ENCODE measurements at regions of chr1 and their contacts with region 1.

Region 1: DNA sequence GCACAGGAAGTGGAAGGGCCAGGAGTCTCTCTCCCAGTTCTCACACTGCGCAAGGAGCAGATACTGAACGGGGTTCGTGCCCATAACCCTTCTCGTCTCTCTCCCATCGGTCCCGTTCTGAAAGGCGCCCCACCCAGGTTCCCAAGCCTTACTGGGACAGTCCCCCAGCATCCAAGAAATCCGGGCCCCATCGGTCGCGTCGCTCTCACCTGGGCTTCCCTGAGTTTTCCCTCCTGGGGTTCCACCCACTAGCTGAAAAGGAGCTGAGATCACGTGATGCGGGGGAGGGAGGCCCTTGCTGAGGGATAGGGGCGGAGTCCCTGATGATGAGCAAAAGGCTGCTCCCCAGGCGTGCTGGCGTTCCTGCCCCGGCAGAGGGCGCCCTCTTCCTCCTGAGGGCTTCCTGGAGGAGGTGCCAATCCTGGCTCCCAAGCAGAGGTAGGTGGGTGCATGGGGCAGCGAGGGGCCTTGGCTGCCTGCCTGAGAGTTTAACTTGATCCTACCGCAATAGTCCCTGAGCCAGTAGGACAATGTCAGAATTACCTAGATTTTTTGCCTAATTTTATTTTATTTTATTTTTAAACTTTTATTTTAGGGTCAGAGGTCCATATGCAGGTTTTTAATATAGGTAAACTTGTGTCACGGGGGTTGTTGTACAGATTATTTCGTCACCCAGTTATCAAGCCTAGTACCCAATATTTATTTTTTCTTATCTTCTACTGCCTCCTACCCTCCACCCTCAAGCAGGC is at the start of gene SPOCD1:
- DNase-seq: peak in 1 of 2 donors; percentile 94
- H3K4me3 ChIP-seq: no peak within 1 kb of the TSS
- H3K27ac ChIP-seq: no peak within 1 kb of the TSS
- H3K4me1 ChIP-seq: no peaks in the 10 kb centered on the region
- H3K27me3 ChIP-seq: no peaks in the 10 kb centered on the region
- CTCF ChIP-seq: peak in 2 of 3 experiments; percentile 21 to 52
- POLR2A ChIP-seq: no peak
- total RNA-seq, gene SPOCD1: 4.2 TPM

Region 2: DNA sequence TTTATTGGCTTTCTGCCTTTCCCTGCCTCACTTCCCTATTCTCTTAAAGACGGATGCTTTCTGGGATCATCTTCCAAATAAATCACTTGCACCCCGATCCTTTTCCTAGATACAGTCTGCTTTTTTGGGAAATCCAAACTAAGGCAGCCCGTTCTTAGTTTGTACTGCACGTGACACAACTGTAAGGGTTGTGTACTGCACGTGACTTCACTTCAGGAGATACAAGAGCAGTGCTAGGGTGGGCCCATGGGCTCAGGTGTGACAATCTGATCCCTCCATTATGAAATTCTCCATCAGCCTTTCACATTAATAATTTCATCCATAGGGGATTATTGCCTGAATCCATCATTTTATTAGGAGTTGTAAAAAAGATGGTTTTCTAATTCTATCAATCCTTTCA is 33.7 kb after region 1 on chr1:
- intact Hi-C with region 1: loop called (anchors 2 kb)
- DNase-seq: no peak
- H3K4me3 ChIP-seq: no peak overlapping the region
- H3K27ac ChIP-seq: no peak overlapping the region
- H3K4me1 ChIP-seq: no peaks in the 10 kb centered on the region
- H3K27me3 ChIP-seq: no peaks in the 10 kb centered on the region
- CTCF ChIP-seq: no peak
- POLR2A ChIP-seq: no peak

Region 3: GRCh38 chr1:31959521-31960340 is 143.8 kb after region 1 on chr1:
- intact Hi-C with region 1: loop called (anchors 10 kb)
- DNase-seq: no peak
- H3K4me3 ChIP-seq: no peak overlapping the region
- H3K27ac ChIP-seq: no peak overlapping the region
- H3K4me1 ChIP-seq: peaks cover 33% of the 10 kb centered on the region
- H3K27me3 ChIP-seq: no peaks in the 10 kb centered on the region
- CTCF ChIP-seq: no peak
- POLR2A ChIP-seq: no peak

Measured in vagina (tissue), 2 donors.